H1 (cell line): ENCODE measurements at regions of chr22 and their contacts with region 1.

Region 1: DNA sequence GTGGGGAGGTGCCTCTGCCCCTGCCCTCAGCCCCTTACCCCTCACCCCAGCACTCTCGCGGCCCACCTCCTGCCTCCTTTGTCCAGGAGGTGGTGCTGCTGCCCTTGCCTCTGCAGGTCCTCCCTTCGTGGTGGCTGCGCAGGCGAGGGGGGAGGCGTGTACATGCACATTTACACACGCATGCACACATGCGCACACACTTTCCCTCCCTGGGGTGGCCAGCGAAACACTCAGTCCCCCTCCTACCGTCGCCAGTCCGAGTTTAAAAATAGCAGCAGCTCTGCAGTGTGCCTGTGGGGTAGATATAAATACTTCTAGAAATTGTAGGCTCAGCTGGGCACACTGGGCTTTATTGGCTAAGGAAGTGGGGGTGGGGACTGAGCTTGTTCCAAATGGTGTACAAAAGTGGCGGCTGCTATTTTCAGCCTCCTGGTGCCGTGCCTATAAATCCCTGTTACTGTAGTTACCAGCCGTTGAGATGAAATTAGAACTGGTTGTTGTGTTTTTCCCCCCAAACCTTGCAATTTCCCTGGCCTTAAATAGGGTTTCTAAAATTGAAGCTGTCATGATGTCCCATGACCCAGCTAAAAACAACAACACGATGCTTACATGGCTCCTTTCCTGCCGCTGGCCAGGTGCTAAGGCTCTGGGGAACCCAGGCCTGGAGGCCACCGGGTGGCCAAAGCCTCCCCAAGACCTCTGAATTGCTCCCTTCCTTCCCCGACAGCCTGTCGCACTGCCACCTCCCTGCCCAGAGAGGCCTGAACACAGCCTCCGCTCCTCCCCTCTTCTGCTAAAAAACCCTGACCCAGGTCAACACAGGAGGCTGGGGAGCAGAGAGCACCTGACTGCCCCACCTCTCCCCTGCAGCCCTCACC is 12.4 kb downstream of the PICK1 start:
- DNase-seq: no peak
- H3K4me3 ChIP-seq: no peak overlapping the region
- H3K27ac ChIP-seq: no peak overlapping the region; the same call in 1 of the 2 replicates
- H3K4me1 ChIP-seq: no peaks in the 10 kb centered on the region
- H3K27me3 ChIP-seq: no peaks in the 10 kb centered on the region
- CTCF ChIP-seq: peak; percentile 64 to 88 (median 65)
- EP300 ChIP-seq: no peak
- POLR2A ChIP-seq: no peak
- RAD21 ChIP-seq: peak; percentile 57 to 76; a peak in 3 of 4 replicates

Region 2: DNA sequence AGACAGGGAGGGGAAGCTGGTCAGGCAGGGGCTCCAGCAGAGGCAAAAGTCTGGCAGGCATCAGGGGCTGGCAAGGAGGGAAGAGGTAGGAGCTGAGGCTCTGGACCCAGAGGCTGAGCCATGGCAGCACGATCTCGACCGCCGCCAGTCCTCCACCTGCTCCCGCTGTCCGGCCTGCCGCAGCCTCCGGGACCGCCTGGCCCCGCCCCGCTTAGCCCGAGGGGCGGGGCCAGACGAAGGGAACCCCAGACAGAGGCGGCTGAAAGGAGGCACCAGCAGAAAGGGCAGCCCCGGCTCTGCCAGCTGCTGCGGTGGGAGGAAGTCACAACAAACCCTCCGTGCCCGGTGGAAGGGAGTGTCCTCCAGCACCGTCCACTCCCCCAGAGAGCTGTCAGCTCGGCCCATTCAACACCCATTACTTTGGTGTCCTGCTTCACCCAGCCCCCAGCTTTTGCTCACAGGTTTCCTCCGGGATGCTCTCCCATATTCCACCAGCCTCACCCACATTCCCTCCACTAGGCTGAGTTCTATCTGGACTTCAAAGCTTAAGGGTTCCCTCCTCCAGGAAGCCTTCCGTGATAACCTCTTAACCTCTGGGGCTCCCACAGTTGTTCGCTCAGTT is 583.3 kb before region 1 on chr22 and contains the start of gene MFNG:
- CTCF ChIA-PET with region 1: no interaction called
- POLR2A ChIA-PET with region 1: no interaction called
- DNase-seq: peak in 1 of 2 experiments; percentile 83
- H3K4me3 ChIP-seq: peak within 1 kb of the TSS in 2 of 4 experiments; percentile 23 to 40; a peak in 3 of 8 replicates
- H3K27ac ChIP-seq: no peak within 1 kb of the TSS
- H3K4me1 ChIP-seq: peaks cover 0 to 32% (median 21%) of the 10 kb centered on the region in 4 experiments; a peak in 6 of 7 replicates
- H3K27me3 ChIP-seq: peaks cover 0 to 4% (median 0%) of the 10 kb centered on the region in 4 experiments; a peak in 1 of 7 replicates
- CTCF ChIP-seq: peak in 1 of 3 experiments; percentile 32; a peak in 1 of 4 replicates
- EP300 ChIP-seq: no peak
- POLR2A ChIP-seq: no peak
- RAD21 ChIP-seq: no peak
- total RNA-seq, gene MFNG: 1.7 and 1.8 TPM in 2 replicates

Region 3: DNA sequence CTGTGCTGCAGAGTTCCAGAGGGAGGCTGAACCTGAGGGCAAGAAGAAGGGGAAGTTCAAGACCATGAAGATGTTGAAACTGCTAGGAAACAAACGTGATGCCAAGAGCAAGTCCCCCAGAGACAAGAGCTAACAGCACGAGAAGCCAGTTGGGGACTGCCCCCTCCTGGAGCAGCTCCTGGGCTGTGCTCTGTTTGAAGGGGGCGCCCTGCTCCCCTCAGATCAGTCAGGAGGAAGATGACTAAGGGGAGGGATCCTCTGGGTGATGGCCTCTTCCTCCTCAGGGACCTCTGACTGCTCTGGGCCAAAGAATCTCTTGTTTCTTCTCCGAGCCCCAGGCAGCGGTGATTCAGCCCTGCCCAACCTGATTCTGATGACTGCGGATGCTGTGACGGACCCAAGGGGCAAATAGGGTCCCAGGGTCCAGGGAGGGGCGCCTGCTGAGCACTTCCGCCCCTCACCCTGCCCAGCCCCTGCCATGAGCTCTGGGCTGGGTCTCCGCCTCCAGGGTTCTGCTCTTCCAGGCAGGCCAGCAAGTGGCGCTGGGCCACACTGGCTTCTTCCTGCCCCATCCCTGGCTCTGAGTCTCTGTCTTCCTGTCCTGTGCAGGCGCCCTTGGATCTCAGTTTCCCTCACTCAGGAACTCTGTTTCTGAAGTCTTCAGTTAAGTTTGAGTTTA is 128.8 kb before region 1 on chr22:
- CTCF ChIA-PET with region 1: no interaction called
- POLR2A ChIA-PET with region 1: no interaction called
- DNase-seq: no peak
- H3K4me3 ChIP-seq: no peak overlapping the region
- H3K27ac ChIP-seq: no peak overlapping the region
- H3K4me1 ChIP-seq: no peaks in the 10 kb centered on the region
- H3K27me3 ChIP-seq: no peaks in the 10 kb centered on the region
- CTCF ChIP-seq: 0 out of 4 replicates have a peak, but pooled peaks of 1 of the 3 experiments have one; percentile 7
- EP300 ChIP-seq: no peak
- POLR2A ChIP-seq: no peak
- RAD21 ChIP-seq: no peak

Region 4: DNA sequence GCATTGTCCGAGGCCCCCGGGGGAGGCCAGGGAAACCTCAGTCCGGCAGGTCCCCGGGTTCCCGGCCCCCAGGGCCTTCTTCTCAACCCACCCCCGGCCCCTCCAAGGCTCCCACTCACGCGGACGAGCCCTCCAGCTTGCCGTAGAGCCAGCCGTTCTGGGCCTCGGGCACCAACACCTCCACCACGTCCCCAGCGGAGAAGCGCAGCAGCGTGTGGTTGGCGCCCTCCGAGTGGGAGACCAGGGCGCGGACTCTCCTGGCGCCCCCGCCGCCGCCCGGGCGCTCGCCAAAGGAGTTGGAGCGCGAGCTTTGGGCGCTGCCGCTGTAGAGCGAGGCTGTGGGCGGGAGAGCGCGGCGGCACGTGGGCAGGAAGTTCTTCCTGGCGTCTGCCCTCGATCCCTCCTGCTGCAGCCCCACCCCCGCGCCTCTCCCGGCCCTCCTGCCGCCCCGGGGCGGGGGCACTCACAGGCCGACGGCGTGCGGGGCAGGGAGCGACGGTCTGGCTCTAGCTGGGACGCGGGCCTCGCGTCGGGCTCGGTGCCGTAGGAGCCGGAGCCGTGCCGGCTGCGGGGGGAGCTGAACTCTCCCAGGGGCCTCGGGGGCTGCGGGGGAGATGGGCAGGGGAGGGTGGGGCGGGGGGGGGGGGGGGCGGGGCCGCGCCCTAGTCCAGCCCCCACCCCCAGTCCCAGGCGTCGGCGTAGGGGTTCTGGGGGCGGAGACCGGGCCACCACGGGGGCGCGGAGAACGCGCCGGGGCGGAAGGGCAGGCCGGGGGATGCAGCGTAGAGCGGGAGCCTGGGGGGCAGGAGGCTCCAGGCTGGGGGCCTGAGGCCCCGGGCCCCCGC is 19.2 kb after region 1 on chr22:
- CTCF ChIA-PET with region 1: interaction called, 264 read pairs
- POLR2A ChIA-PET with region 1: interaction called, 5 read pairs
- DNase-seq: no peak
- H3K4me3 ChIP-seq: peak overlapping the region in 2 of 4 experiments; percentile 23 to 54; a peak in 3 of 8 replicates
- H3K27ac ChIP-seq: no peak overlapping the region
- H3K4me1 ChIP-seq: peaks cover 0 to 19% (median 13%) of the 10 kb centered on the region in 4 experiments; a peak in 6 of 7 replicates
- H3K27me3 ChIP-seq: peaks cover 0 to 4% (median 0%) of the 10 kb centered on the region in 4 experiments; a peak in 2 of 7 replicates
- CTCF ChIP-seq: no peak
- EP300 ChIP-seq: no peak
- POLR2A ChIP-seq: no peak
- RAD21 ChIP-seq: no peak

Region 5: GRCh38 chr22:38104084-38104483 is 34.5 kb after region 1 on chr22:
- CTCF ChIA-PET with region 1: interaction called, 264 read pairs
- POLR2A ChIA-PET with region 1: interaction called, 4 read pairs
- DNase-seq: peak in 1 of 2 experiments; percentile 65
- H3K4me3 ChIP-seq: no peak overlapping the region
- H3K27ac ChIP-seq: no peak overlapping the region
- H3K4me1 ChIP-seq: no peaks in the 10 kb centered on the region
- H3K27me3 ChIP-seq: no peaks in the 10 kb centered on the region
- CTCF ChIP-seq: peak; percentile 72 to 81 (median 80)
- EP300 ChIP-seq: no peak
- POLR2A ChIP-seq: no peak
- RAD21 ChIP-seq: peak; percentile 63 to 72

Region 6: DNA sequence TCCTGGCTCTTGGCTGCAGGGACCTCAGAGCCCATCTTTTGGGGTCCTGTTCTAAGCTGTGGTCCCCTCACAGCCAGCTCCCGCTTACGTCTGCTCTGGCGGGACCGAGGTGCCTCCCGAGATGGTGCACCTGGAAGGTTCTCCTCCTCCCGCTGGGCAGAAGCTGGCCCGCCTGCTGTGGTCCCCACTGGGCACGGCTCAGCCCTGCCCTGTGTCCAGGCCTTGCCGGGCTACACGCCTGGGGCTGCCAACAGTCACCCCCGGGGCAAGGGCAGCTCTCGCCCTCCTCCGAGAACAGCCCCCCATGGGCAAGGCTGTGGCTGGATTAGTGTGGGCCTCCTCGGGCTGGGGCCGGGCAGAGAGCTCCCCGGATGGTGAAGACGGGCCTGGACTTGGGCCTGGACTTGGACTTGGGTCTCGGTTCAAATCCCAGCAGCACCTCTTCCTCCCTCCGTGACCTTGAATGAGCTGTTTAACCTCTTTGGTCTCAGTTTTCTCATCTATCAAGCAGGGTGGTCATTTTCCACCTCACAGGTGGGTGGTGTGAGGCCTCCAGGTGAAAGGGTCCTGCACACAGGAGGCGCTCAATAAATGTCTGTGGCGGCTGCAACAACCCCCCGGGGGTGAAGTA is 39.9 kb after region 1 on chr22:
- CTCF ChIA-PET with region 1: interaction called, 264 read pairs
- POLR2A ChIA-PET with region 1: interaction called, 4 read pairs
- DNase-seq: no peak
- H3K4me3 ChIP-seq: no peak overlapping the region
- H3K27ac ChIP-seq: no peak overlapping the region
- H3K4me1 ChIP-seq: peaks cover 0 to 9% (median 7%) of the 10 kb centered on the region in 4 experiments; a peak in 3 of 7 replicates
- H3K27me3 ChIP-seq: no peaks in the 10 kb centered on the region
- CTCF ChIP-seq: no peak
- EP300 ChIP-seq: no peak
- POLR2A ChIP-seq: no peak
- RAD21 ChIP-seq: no peak

Region 7: DNA sequence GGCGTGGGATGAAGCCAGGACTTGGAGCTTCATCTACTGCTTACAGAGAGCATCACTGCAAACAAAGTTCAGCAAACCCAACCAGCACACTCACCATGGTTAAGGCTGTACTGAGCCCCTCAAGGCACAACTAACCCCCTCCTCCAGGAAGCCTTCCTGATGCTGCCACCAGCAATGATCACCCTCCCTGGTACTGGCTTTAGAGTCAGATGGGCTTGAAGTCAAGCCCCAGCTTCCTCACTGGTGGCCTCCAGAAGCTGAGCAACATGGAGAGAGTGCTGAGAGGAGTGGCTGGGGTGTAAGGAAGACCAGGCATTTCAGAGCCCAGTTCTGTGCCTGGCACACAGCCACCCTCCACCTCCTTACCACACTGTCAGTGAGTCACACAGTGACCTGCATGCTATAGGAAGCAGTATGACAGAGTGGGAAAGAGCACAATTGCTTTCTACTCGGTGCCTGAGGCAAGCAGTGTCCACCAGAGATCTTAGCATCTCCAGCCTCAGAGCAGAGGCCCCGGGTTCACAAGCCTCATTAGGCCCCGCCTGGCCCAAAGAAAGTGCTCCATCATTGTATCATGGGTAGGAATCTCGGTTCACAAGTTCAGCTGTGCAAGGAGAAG is 65.6 kb after region 1 on chr22:
- CTCF ChIA-PET with region 1: interaction called, 11 read pairs
- POLR2A ChIA-PET with region 1: interaction called, 3 read pairs
- DNase-seq: no peak
- H3K4me3 ChIP-seq: no peak overlapping the region
- H3K27ac ChIP-seq: no peak overlapping the region
- H3K4me1 ChIP-seq: no peaks in the 10 kb centered on the region
- H3K27me3 ChIP-seq: no peaks in the 10 kb centered on the region
- CTCF ChIP-seq: no peak
- EP300 ChIP-seq: no peak
- POLR2A ChIP-seq: no peak
- RAD21 ChIP-seq: no peak

Region 8: GRCh38 chr22:38143036-38143697 is 73.6 kb after region 1 on chr22:
- CTCF ChIA-PET with region 1: interaction called, 15 read pairs
- POLR2A ChIA-PET with region 1: no interaction called
- DNase-seq: no peak
- H3K4me3 ChIP-seq: no peak overlapping the region
- H3K27ac ChIP-seq: no peak overlapping the region
- H3K4me1 ChIP-seq: peaks cover 0 to 3% (median 0%) of the 10 kb centered on the region in 4 experiments; a peak in 3 of 7 replicates
- H3K27me3 ChIP-seq: no peaks in the 10 kb centered on the region
- CTCF ChIP-seq: no peak
- EP300 ChIP-seq: no peak
- POLR2A ChIP-seq: no peak
- RAD21 ChIP-seq: no peak